Caco-2 (cell line): ENCODE measurements at regions of chr1 and their contacts with region 1.

Region 1: DNA sequence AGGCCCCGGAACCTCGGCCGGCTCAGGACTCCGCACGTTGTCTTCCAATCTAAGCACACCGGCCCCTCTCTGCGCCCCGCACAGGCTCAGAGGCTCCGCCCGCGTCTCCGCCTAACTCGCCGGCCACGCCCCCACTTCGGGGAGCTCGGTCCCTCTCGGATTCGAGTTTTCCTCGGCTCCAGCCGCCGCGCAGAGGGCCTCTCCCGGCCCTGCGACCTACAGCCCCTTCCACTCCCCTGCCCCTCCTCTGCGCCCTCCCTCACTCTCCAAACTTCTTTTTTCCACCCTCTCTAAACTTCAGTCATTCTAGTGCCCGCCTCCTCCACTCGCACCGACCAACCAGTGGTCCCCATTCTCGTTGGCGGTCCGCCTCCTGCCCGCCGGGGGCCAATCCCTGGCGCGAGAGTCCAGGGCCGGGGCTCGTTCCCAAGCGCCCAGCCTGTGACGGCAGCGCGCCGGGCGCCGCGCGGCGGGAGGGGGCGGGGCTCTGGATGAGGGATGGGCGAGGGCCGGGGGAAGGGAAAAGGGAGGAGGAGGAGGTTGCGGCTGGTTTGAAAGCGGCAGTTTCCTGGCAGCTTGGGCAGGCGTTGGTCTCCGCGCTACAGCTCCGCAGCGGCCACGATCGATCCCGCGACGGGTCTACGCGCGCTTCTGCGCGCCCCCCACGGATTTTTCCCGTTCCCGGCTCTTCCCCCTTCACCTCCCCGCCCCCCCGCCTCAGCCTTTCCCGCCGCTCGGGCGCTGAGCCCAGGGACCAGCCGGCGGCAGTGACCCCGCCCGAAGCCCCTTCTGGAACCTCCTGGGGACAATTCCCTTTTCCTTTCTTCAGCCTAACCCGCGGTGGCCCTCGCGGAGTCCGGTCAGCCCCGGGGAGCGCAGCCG is at the start of gene MAGI3:
- DNase-seq: peak; percentile 97 to 98
- H3K4me3 ChIP-seq: peak within 1 kb of the TSS; percentile 71
- H3K4me3 Mint-ChIP-seq: peak within 1 kb of the TSS; percentile 90
- H3K27ac Mint-ChIP-seq: peak within 1 kb of the TSS; percentile 34
- H3K4me1 ChIP-seq: peaks cover 8% of the 10 kb centered on the region
- H3K4me1 Mint-ChIP-seq: no peaks in the 10 kb centered on the region
- H3K27me3 ChIP-seq: no peaks in the 10 kb centered on the region
- H3K27me3 Mint-ChIP-seq: no peaks in the 10 kb centered on the region
- CTCF ChIP-seq: no peak
- total RNA-seq, gene MAGI3: 27.6 and 28.7 TPM in 2 replicates

Region 2: DNA sequence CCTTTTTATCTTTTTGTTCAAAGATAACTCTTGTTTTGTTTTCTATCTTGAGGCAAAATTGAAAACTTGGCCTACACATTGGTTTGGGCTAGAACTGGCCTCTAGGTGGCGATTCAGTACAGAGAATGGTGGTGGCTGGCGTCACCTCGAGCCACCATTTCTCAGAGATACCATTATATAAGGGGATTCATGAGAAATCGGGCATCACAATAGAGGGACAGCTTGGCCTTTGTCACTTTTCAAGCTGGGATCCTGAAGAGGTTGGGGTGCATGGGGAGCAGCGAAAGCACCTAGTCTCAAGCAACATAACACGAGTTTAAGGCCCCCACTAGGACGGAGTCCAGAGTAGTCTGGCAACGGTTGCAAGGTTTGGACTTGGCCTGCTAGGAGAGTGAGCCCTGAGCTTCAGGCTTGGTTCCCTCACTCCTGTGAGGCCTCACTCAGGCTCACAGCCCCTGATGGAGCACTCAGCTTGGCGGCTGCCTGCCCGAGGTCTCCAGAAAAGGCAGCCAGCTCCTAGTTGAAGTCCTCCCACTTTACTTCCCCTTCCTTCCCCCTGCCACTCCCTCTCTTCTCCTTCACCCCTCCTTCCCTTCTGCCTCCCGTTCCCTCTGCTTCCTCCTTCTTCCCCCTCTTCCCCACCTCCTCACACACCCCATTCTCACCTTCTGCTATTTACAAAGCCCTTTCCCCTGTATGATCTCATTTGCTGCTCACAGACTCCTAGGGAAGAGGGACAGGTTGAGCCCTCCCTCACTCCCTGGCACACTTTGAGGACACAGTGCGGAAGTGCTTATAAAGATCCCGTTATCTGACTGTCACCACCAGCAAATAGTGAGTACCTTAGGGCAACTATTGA is 249.4 kb before region 1 on chr1:
- CTCF ChIA-PET with region 1: no interaction called
- POLR2A ChIA-PET with region 1: no interaction called
- intact Hi-C with region 1: loop called (anchors 1 kb)
- DNase-seq: peak; percentile 51 to 62
- H3K4me3 ChIP-seq: no peak overlapping the region
- H3K4me3 Mint-ChIP-seq: no peak overlapping the region
- H3K27ac Mint-ChIP-seq: peak overlapping the region; percentile 68
- H3K4me1 ChIP-seq: peaks cover 15% of the 10 kb centered on the region
- H3K4me1 Mint-ChIP-seq: peaks cover 13% of the 10 kb centered on the region
- H3K27me3 ChIP-seq: no peaks in the 10 kb centered on the region
- H3K27me3 Mint-ChIP-seq: no peaks in the 10 kb centered on the region
- CTCF ChIP-seq: peak; percentile 64 to 76

Region 3: GRCh38 chr1:113307771-113308445 is 82.3 kb before region 1 on chr1:
- CTCF ChIA-PET with region 1: no interaction called
- POLR2A ChIA-PET with region 1: interaction called, 3 read pairs
- intact Hi-C with region 1: loop called (anchors 5 kb)
- DNase-seq: peak in 1 of 2 experiments; percentile 57
- H3K4me3 ChIP-seq: no peak overlapping the region
- H3K4me3 Mint-ChIP-seq: peak overlapping the region; percentile 59
- H3K27ac Mint-ChIP-seq: peak overlapping the region; percentile 84
- H3K4me1 ChIP-seq: peaks cover 23% of the 10 kb centered on the region
- H3K4me1 Mint-ChIP-seq: peaks cover 40% of the 10 kb centered on the region
- H3K27me3 ChIP-seq: no peaks in the 10 kb centered on the region
- H3K27me3 Mint-ChIP-seq: no peaks in the 10 kb centered on the region
- CTCF ChIP-seq: no peak

Region 4: DNA sequence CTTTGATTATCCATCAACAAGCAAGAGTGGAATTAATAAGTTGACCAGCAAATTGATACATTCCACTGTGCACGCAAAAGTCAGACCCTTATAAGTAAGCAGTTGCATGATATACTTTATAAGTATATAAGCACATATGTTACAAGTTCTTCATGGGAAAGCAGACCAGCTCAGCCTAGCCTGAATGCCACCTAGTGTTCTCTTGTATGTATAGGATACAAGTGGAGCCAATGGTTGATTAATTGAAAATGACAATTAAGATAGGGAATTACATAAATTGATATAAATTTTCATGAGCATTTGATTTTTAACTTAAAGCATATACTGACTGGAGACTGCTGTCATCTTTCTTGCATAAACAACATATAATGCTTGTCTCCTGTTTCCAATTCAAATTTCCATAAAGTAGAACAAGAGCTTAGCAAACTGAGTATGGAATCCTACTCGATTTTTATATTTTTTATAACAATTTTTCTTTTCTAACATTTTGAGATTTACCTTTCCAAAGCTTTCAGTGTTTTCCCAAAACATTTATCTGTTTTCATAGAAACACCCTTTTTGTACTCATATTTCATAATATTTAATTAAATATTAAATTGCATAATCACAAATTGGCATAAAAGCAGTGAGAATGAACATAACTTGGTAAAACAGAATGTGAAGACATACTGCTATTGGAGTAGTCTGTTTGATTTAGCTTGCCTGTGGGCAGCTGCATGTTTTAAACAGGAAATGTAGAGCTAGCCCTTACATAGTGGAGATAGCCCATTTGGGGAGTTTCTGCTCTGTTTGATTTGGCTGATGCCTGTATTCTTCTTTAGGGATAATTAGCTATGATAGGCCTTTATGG is 63.0 kb after region 1 on chr1:
- CTCF ChIA-PET with region 1: interaction called, 3 read pairs
- POLR2A ChIA-PET with region 1: no interaction called
- intact Hi-C with region 1: loop called (anchors 2 kb)
- DNase-seq: peak; percentile 4 to 29
- H3K4me3 ChIP-seq: no peak overlapping the region
- H3K4me3 Mint-ChIP-seq: no peak overlapping the region
- H3K27ac Mint-ChIP-seq: no peak overlapping the region
- H3K4me1 ChIP-seq: peaks cover 8% of the 10 kb centered on the region
- H3K4me1 Mint-ChIP-seq: peaks cover 30% of the 10 kb centered on the region
- H3K27me3 ChIP-seq: no peaks in the 10 kb centered on the region
- H3K27me3 Mint-ChIP-seq: no peaks in the 10 kb centered on the region
- CTCF ChIP-seq: peak; percentile 25 to 39